HCT116 (cell line): ENCODE measurements at regions of chrX and their contacts with region 1.

Region 1: DNA sequence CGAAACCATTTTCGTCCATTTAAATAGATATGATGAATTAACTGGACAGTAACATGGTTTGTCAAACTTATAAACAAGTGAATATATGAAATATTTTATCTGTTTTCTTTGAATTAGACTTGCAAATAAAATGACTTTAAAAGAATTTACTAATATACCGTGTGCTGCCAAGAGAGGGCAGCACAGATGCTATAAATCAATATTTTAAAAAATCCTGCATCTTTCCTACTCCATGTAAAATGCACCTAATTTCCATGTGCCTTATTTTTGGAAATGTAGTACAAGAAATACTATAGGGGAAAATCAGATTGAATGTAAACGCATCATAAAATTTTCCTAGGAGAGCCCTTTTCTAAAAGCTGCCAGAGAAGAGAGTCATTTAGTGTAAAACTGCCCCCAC is 62.2 kb downstream of the PRKX start:
- DNase-seq: peak; percentile 0
- ATAC-seq: no peak
- H3K4me3 ChIP-seq: no peak overlapping the region
- H3K27ac ChIP-seq: no peak overlapping the region
- H3K4me1 ChIP-seq: no peaks in the 10 kb centered on the region
- H3K27me3 ChIP-seq: no peaks in the 10 kb centered on the region
- CTCF ChIP-seq: peak; percentile 36 to 55 (median 37); a peak in 5 of 6 replicates
- POLR2A ChIP-seq: no peak
- RAD21 ChIP-seq: peak; percentile 52

Region 2: DNA sequence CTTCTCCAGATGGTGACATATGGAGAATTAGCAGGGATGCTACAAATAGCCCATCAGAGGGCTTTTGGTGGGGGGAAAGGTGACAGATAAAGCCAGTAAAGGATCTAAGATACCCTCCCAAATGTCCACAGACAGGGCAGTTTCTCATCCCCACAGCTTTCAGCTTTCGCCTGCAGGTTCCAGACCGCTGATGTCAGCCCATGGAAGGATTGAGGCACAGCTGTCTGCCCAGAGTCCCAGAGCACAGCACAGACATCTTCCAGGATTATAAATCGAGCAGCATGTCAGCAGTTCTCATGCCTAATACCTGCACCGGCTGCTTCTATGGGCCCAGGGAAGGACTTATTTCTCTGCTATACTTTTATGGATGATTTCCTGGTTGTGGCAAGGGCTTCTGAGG is 208.1 kb before region 1 on chrX:
- CTCF ChIA-PET with region 1: no interaction called
- POLR2A ChIA-PET with region 1: no interaction called
- RAD21 ChIA-PET with region 1: no interaction called
- intact Hi-C with region 1: no loop called
- DNase-seq: no peak
- ATAC-seq: no peak
- H3K4me3 ChIP-seq: no peak overlapping the region
- H3K27ac ChIP-seq: no peak overlapping the region
- H3K4me1 ChIP-seq: no peaks in the 10 kb centered on the region
- H3K27me3 ChIP-seq: no peaks in the 10 kb centered on the region
- CTCF ChIP-seq: no peak
- POLR2A ChIP-seq: no peak
- RAD21 ChIP-seq: no peak

Region 3: DNA sequence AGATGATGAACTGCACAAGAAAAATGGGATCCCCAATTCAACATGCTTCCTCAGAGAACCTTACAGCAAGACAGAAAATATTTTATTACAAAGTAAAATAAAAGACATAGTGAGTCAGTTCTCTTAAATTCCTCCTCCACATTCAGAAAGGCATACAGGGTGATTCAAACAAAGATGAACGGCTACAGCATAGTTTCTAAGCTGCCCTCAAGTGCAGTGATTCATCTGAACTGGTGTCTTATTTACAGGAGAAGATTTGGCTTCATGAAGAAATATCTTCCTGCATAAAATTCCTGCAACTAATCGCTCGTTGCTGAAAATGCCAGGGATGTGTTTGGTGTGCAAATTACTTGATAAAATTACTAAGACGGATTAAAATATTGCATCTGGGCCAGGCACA is 41.5 kb before region 1 on chrX:
- CTCF ChIA-PET with region 1: no interaction called
- POLR2A ChIA-PET with region 1: no interaction called
- RAD21 ChIA-PET with region 1: no interaction called
- intact Hi-C with region 1: no loop called
- DNase-seq: no peak
- ATAC-seq: no peak
- H3K4me3 ChIP-seq: no peak overlapping the region
- H3K27ac ChIP-seq: no peak overlapping the region
- H3K4me1 ChIP-seq: no peaks in the 10 kb centered on the region
- H3K27me3 ChIP-seq: no peaks in the 10 kb centered on the region
- CTCF ChIP-seq: no peak
- POLR2A ChIP-seq: no peak
- RAD21 ChIP-seq: no peak

Region 4: GRCh38 chrX:3798550-3798949 is 147.3 kb after region 1 on chrX:
- CTCF ChIA-PET with region 1: no interaction called
- POLR2A ChIA-PET with region 1: no interaction called
- RAD21 ChIA-PET with region 1: no interaction called
- intact Hi-C with region 1: loop called (anchors 10 kb)
- DNase-seq: no peak
- ATAC-seq: no peak
- H3K4me3 ChIP-seq: no peak overlapping the region
- H3K27ac ChIP-seq: no peak overlapping the region
- H3K4me1 ChIP-seq: no peaks in the 10 kb centered on the region
- H3K27me3 ChIP-seq: no peaks in the 10 kb centered on the region
- CTCF ChIP-seq: no peak
- POLR2A ChIP-seq: no peak
- RAD21 ChIP-seq: no peak

Region 5: GRCh38 chrX:3811331-3812311 is 160.3 kb after region 1 on chrX:
- CTCF ChIA-PET with region 1: interaction called, 6 read pairs
- POLR2A ChIA-PET with region 1: no interaction called
- RAD21 ChIA-PET with region 1: no interaction called
- intact Hi-C with region 1: loop called (anchors 1 kb)
- DNase-seq: peak; percentile 6
- ATAC-seq: no peak
- H3K4me3 ChIP-seq: no peak overlapping the region
- H3K27ac ChIP-seq: no peak overlapping the region
- H3K4me1 ChIP-seq: peaks cover 2 to 8% of the 10 kb centered on the region in 2 experiments; a peak in 2 of 4 replicates
- H3K27me3 ChIP-seq: 0 out of 2 replicates have a peak, but pooled peaks cover 3% of the 10 kb centered on the region
- CTCF ChIP-seq: peak in 2 of 3 experiments; percentile 49 to 52; a peak in 4 of 6 replicates
- POLR2A ChIP-seq: no peak
- RAD21 ChIP-seq: no peak